ENCODE measurements at regions of chr3 and their contacts with region 1.

Region 1: GRCh38 chr3:113838631-113839209 is at the start of gene GRAMD1C:
- DNase-seq: peak; percentile 74 to 94 (median 80)
- ATAC-seq: peak; percentile 99
- H3K4me3 ChIP-seq: peak within 1 kb of the TSS; percentile 56
- H3K4me3 Mint-ChIP-seq: peak within 1 kb of the TSS; percentile 74
- H3K27ac ChIP-seq: no peak within 1 kb of the TSS
- H3K27ac Mint-ChIP-seq: no peak within 1 kb of the TSS
- H3K4me1 ChIP-seq: peaks cover 8% of the 10 kb centered on the region
- H3K4me1 Mint-ChIP-seq: no peaks in the 10 kb centered on the region
- H3K27me3 ChIP-seq: no peaks in the 10 kb centered on the region
- H3K27me3 Mint-ChIP-seq: no peaks in the 10 kb centered on the region
- CTCF ChIP-seq: peak; percentile 83
- total RNA-seq, gene GRAMD1C: 0.22 to 0.55 TPM

Region 2: DNA sequence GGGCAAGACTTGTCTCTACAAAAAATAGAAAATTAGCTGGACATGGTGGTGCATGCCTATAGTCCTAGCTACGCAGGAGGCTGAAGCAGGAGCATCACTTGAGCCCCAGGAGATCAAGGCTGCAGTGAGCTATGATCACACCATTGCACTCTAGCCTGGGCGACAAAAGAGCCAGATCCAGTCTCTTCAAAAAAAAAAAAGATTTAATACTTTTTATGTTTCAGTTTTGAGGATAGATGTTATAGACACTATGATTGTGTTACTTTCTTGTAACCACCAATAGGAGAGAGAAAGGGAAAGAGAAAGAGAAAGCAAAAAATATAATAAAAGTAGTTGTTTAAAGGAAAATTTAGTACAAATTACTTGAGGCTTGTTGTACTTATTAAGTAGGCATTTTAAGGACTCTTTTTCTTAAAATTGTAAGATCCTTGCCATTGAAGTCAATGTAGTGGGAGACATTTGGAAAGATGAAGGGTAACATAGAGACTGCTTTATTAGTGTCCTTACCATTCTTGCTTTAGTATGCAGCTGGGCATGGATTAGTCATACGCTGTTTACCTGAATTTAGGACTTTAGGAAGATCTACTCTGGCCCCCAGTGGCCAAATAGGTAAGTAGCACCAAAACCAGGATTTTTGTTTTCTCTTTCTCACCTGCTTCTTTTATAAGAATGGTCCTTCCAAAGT is 74.0 kb after region 1 on chr3:
- CTCF ChIA-PET with region 1: interaction called, 7 read pairs
- POLR2A ChIA-PET with region 1: no interaction called
- intact Hi-C with region 1: loop called in 1 of 2 experiments (anchors 2 kb)
- DNase-seq: peak in 7 of 14 experiments; percentile 12 to 71 (median 45)
- ATAC-seq: peak; percentile 96
- H3K4me3 ChIP-seq: peak overlapping the region; percentile 21
- H3K4me3 Mint-ChIP-seq: peak overlapping the region; percentile 18
- H3K27ac ChIP-seq: no peak overlapping the region
- H3K27ac Mint-ChIP-seq: peak overlapping the region; percentile 14
- H3K4me1 ChIP-seq: peaks cover 4% of the 10 kb centered on the region
- H3K4me1 Mint-ChIP-seq: peaks cover 5% of the 10 kb centered on the region
- H3K27me3 ChIP-seq: no peaks in the 10 kb centered on the region
- H3K27me3 Mint-ChIP-seq: no peaks in the 10 kb centered on the region
- CTCF ChIP-seq: peak; percentile 73

Region 3: DNA sequence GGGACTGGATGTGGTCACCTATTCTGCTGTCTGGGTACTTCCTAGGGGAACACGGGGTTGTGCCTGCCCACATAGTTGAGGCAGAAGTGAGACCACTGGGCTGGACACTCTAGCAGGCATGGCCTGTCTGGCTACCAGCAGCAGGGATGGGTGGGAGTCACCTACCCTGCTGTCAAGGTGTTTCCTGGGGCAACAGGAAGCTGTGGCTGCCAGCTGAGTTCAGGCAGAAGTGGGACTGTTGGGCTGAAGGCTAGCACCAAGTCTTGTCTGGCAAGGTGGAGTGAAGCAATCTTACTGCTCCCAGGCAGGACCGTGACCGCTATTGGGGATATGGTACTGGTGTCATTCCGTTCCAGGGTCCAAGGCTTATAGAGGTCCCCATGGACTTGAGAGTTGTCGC is 88.8 kb after region 1 on chr3:
- CTCF ChIA-PET with region 1: no interaction called
- POLR2A ChIA-PET with region 1: no interaction called
- intact Hi-C with region 1: no loop called
- DNase-seq: no peak
- ATAC-seq: no peak
- H3K4me3 ChIP-seq: no peak overlapping the region
- H3K4me3 Mint-ChIP-seq: no peak overlapping the region
- H3K27ac ChIP-seq: no peak overlapping the region
- H3K27ac Mint-ChIP-seq: no peak overlapping the region
- H3K4me1 ChIP-seq: peaks cover 4% of the 10 kb centered on the region
- H3K4me1 Mint-ChIP-seq: no peaks in the 10 kb centered on the region
- H3K27me3 ChIP-seq: peaks cover 0 to 2% of the 10 kb centered on the region in 2 experiments
- H3K27me3 Mint-ChIP-seq: peaks cover 18% of the 10 kb centered on the region
- CTCF ChIP-seq: no peak

Region 4: GRCh38 chr3:114056130-114057010 is 217.7 kb after region 1 on chr3 and contains the starts of genes CCDC191 and QTRT2:
- CTCF ChIA-PET with region 1: no interaction called
- POLR2A ChIA-PET with region 1: interaction called, 4 read pairs
- intact Hi-C with region 1: loop called (anchors 5 to 10 kb)
- DNase-seq: peak; percentile 93 to 100 (median 97)
- ATAC-seq: peak; percentile 95
- H3K4me3 ChIP-seq: peak within 1 kb of the TSS; percentile 88
- H3K4me3 Mint-ChIP-seq: peak within 1 kb of the TSS; percentile 95
- H3K27ac ChIP-seq: peak within 1 kb of the TSS; percentile 87 to 96
- H3K27ac Mint-ChIP-seq: peak within 1 kb of the TSS; percentile 94
- H3K4me1 ChIP-seq: peaks cover 18% of the 10 kb centered on the region
- H3K4me1 Mint-ChIP-seq: peaks cover 53% of the 10 kb centered on the region
- H3K27me3 ChIP-seq: no peaks in the 10 kb centered on the region
- H3K27me3 Mint-ChIP-seq: no peaks in the 10 kb centered on the region
- CTCF ChIP-seq: no peak
- total RNA-seq, gene CCDC191: 3.6 to 3.7 TPM
- total RNA-seq, gene QTRT2: 22.8 to 27.0 TPM

Region 5: GRCh38 chr3:114418724-114419543 is 580.2 kb after region 1 on chr3:
- CTCF ChIA-PET with region 1: no interaction called
- POLR2A ChIA-PET with region 1: no interaction called
- intact Hi-C with region 1: loop called (anchors 2 kb)
- DNase-seq: peak in 4 of 14 experiments; percentile 6 to 79 (median 78)
- ATAC-seq: peak; percentile 92
- H3K4me3 ChIP-seq: no peak overlapping the region
- H3K4me3 Mint-ChIP-seq: no peak overlapping the region
- H3K27ac ChIP-seq: no peak overlapping the region
- H3K27ac Mint-ChIP-seq: no peak overlapping the region
- H3K4me1 ChIP-seq: no peaks in the 10 kb centered on the region
- H3K4me1 Mint-ChIP-seq: peaks cover 6% of the 10 kb centered on the region
- H3K27me3 ChIP-seq: no peaks in the 10 kb centered on the region
- H3K27me3 Mint-ChIP-seq: no peaks in the 10 kb centered on the region
- CTCF ChIP-seq: peak; percentile 86

Region 6: DNA sequence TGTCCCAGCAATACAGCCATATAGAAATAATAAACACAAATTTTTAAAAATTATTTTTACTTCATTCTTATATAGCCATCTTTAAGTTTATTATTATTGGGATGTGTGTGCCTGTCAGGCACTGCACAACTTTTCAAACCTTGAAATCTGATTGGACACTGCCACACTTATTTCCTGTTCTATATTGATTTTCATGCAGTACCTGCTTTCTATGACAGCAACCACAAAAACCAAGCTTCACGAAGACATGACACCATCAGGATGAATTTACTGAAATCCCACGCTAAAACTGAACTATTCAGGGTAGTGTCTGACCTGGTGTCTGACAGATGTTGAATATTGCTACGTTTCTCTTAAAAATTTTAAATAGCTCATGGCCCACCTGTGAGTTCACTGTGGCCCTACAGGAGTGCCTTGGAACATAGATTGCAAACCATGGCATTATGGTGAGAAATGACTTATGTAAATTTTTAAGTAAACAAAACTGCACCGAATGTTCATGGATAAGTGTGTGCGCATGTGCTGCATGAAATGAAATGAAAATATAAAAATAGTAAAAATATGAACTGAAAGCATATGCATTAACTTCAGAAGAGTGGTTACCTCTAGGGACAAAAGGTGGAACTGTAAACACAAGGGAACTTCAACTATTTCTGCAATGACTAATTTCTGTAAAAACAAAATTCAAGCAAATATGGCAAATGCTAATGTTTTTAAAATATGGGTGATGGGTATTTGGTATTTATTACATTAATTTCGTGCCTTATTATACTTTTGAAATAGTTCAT is 1156.0 kb after region 1 on chr3:
- CTCF ChIA-PET with region 1: no interaction called
- POLR2A ChIA-PET with region 1: no interaction called
- intact Hi-C with region 1: no loop called
- DNase-seq: no peak
- ATAC-seq: no peak
- H3K4me3 ChIP-seq: no peak overlapping the region
- H3K4me3 Mint-ChIP-seq: no peak overlapping the region
- H3K27ac ChIP-seq: no peak overlapping the region
- H3K27ac Mint-ChIP-seq: no peak overlapping the region
- H3K4me1 ChIP-seq: no peaks in the 10 kb centered on the region
- H3K4me1 Mint-ChIP-seq: peaks cover 4% of the 10 kb centered on the region
- H3K27me3 ChIP-seq: no peaks in the 10 kb centered on the region
- H3K27me3 Mint-ChIP-seq: no peaks in the 10 kb centered on the region
- CTCF ChIP-seq: no peak

Measured in CD4-positive, alpha-beta T cell (primary cell).